ENCODE measurements at regions of chr18 and their contacts with region 1.

Region 1: DNA sequence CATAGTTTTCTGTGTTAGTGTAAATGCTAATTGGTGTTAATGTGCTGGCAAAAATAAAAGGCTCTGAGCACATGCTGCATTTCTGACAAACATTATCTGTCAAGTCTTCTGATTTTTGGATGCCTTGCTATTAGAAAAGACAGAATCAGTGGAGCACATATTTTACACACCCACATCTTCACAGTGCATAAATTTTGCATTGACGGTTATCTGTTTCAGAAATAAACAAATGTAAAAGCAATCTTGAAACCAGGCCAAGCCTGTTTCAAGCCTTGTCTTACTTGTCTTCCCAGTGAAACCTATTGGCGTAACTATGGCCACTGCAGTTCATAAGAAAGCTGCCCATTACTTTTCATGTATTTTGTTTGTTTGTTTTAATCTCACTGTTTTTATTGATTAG is 333.7 kb upstream of the CDH19 start:
- DNase-seq: no peak
- ATAC-seq: no peak
- H3K4me3 ChIP-seq: no peak overlapping the region
- H3K27ac ChIP-seq: no peak overlapping the region
- H3K4me1 ChIP-seq: no peaks in the 10 kb centered on the region
- H3K27me3 ChIP-seq: no peaks in the 10 kb centered on the region
- CTCF ChIP-seq: no peak
- POLR2A ChIP-seq: no peak

Region 2: DNA sequence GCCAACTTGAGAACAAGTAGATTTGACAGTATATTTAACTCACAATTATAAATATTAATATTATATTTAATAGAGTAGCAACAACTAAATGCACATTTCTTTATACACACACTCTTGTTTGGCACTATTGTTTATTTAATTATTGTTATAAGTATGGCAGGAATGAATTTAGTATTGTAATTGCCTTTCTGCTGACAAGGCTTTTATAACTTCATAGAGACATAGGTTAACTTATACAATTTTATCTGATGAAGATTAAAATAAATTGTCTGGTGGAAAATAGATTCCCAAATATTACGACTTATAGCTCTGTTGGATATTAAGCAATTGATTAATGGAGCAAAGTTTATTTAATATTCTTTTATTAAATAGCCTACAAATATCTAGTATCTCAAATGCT is 14.2 kb after region 1 on chr18:
- intact Hi-C with region 1: loop called in 1 of 10 experiments (anchors 1 kb)
- DNase-seq: no peak
- ATAC-seq: no peak
- H3K4me3 ChIP-seq: no peak overlapping the region
- H3K27ac ChIP-seq: no peak overlapping the region
- H3K4me1 ChIP-seq: no peaks in the 10 kb centered on the region
- H3K27me3 ChIP-seq: no peaks in the 10 kb centered on the region
- CTCF ChIP-seq: no peak
- POLR2A ChIP-seq: no peak

Measured in heart left ventricle (tissue), 16 donors.